ENCODE measurements at regions of chr16 and their contacts with region 1.

Region 1: DNA sequence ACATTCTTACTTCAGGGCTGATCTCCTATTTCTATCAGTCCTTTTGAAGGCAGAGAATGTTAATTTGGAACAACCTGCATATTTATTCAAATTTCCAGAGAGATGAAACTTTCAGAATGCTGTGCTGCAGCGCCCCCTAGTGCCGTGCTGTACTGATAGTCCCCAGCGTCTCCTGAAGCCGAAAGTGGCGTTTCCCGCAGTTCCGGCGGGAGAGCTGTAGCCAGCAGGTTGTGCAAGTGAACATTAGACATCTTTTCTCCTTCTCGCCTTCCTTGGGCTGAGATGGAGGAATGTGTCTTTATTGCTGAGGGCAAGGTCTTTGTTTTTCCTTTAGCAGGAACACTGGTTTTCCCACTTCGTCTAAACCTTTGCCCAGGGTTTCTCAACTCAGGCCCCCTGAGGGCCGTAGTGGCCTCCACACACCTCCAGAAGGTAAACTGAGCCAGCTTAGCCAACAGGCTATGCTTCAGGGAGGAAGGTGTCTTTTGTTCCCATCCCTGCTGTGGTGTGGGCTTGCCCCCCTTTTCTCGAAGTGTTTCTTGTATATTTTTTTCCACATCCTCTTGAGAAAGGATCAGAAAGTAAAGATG is 26.4 kb downstream of the USP10 start:
- DNase-seq: peak; percentile 62 to 85 (median 77)
- H3K4me3 ChIP-seq: peak overlapping the region; percentile 15
- H3K4me3 Mint-ChIP-seq: peak overlapping the region in 6 of 7 donors; percentile 29 to 68 (median 62)
- H3K27ac ChIP-seq: no peak overlapping the region
- H3K27ac Mint-ChIP-seq: peak overlapping the region in 4 of 8 donors; percentile 56 to 83 (median 78)
- H3K4me1 ChIP-seq: peaks cover 31% of the 10 kb centered on the region
- H3K4me1 Mint-ChIP-seq: peaks cover 47 to 71% (median 70%) of the 10 kb centered on the region in 3 donors
- H3K27me3 ChIP-seq: no peaks in the 10 kb centered on the region
- H3K27me3 Mint-ChIP-seq: no peaks in the 10 kb centered on the region

Region 2: GRCh38 chr16:84277237-84277823 is 448.8 kb before region 1 on chr16:
- CTCF ChIA-PET with region 1: interaction called, 16 read pairs
- POLR2A ChIA-PET with region 1: no interaction called
- DNase-seq: peak; percentile 29 to 80 (median 50)
- H3K4me3 ChIP-seq: no peak overlapping the region
- H3K4me3 Mint-ChIP-seq: no peak overlapping the region
- H3K27ac ChIP-seq: no peak overlapping the region
- H3K27ac Mint-ChIP-seq: no peak overlapping the region
- H3K4me1 ChIP-seq: no peaks in the 10 kb centered on the region
- H3K4me1 Mint-ChIP-seq: peaks cover 0 to 1% (median 0%) of the 10 kb centered on the region in 3 donors
- H3K27me3 ChIP-seq: no peaks in the 10 kb centered on the region
- H3K27me3 Mint-ChIP-seq: peaks cover 9 to 17% of the 10 kb centered on the region in 2 donors

Region 3: GRCh38 chr16:84511180-84511824 is 214.9 kb before region 1 on chr16:
- CTCF ChIA-PET with region 1: interaction called, 13 read pairs
- POLR2A ChIA-PET with region 1: no interaction called
- DNase-seq: peak; percentile 65 to 89 (median 81)
- H3K4me3 ChIP-seq: peak overlapping the region; percentile 4
- H3K4me3 Mint-ChIP-seq: peak overlapping the region; percentile 7 to 57 (median 16)
- H3K27ac ChIP-seq: no peak overlapping the region
- H3K27ac Mint-ChIP-seq: peak overlapping the region in 7 of 8 donors; percentile 50 to 92 (median 83)
- H3K4me1 ChIP-seq: peaks cover 85% of the 10 kb centered on the region
- H3K4me1 Mint-ChIP-seq: peaks cover 57 to 71% (median 70%) of the 10 kb centered on the region in 3 donors
- H3K27me3 ChIP-seq: no peaks in the 10 kb centered on the region
- H3K27me3 Mint-ChIP-seq: peaks cover 0 to 4% of the 10 kb centered on the region in 2 donors

Region 4: DNA sequence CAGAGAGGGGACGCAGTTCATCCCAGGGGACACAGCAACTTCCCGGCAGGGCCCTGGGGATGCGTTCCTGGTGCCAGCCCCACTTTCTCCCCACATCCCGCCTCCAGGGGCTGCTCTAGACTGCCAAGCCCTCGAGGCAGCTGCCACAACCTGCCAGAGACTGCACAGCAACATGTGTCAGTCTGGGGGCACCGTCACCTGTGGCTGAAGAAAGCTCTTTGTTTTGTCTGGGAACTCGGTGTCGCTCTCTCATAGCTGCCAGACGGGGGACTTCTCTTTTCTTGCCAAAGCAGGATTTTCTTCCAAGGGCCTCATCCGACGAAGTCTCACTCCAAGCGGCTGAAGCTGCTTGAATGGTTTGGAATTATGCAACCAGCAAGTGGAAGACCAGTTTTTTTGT is 152.0 kb before region 1 on chr16:
- CTCF ChIA-PET with region 1: no interaction called
- POLR2A ChIA-PET with region 1: no interaction called
- DNase-seq: no peak
- H3K4me3 ChIP-seq: no peak overlapping the region
- H3K4me3 Mint-ChIP-seq: peak overlapping the region in 1 of 7 donors; percentile 20
- H3K27ac ChIP-seq: no peak overlapping the region
- H3K27ac Mint-ChIP-seq: peak overlapping the region in 4 of 8 donors; percentile 17 to 57 (median 36)
- H3K4me1 ChIP-seq: no peaks in the 10 kb centered on the region
- H3K4me1 Mint-ChIP-seq: peaks cover 57 to 87% (median 81%) of the 10 kb centered on the region in 3 donors
- H3K27me3 ChIP-seq: no peaks in the 10 kb centered on the region
- H3K27me3 Mint-ChIP-seq: no peaks in the 10 kb centered on the region

Region 5: DNA sequence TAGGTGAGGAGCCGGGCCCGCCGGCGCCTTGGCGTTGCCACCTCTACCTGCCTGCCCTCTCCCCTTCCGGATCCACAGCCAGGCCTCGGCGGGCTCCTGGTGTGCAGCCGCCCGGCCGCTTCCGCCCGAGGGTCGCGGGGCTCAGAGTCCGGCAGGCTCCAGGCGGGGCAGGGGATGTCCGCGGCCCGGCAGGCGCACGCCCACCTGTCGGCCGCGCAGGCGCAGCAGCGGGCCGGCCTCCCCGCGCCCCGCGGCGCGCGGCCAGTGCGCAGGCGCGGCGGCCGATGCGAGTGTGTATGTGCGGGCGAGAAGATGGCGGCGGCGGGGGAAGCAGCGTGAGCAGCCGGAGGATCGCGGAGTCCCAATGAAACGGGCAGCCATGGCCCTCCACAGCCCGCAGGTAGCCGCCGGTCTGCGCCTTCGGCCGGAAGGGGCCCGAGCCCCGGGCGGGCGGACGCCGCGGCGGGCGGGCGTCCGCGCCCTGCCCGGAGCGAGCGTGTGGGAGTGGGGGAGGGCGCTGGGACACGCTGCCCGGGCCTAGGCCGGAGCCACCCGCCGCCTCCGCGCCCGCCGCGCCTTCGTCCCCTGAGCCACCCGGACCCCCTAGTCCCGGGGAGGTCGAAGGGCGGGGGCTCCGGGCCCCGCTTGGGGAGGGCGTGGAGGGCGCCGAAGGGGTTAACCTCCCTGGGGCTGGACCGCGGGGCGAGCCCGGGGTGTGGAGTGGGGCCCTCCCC is 26.3 kb before region 1 on chr16 and contains the start of gene USP10:
- CTCF ChIA-PET with region 1: interaction called, 10 read pairs
- POLR2A ChIA-PET with region 1: no interaction called
- DNase-seq: peak; percentile 78 to 89 (median 85)
- H3K4me3 ChIP-seq: peak within 1 kb of the TSS; percentile 74
- H3K4me3 Mint-ChIP-seq: peak within 1 kb of the TSS; percentile 96 to 99 (median 98)
- H3K27ac ChIP-seq: peak within 1 kb of the TSS; percentile 73
- H3K27ac Mint-ChIP-seq: peak within 1 kb of the TSS; percentile 91 to 98 (median 96)
- H3K4me1 ChIP-seq: peaks cover 37% of the 10 kb centered on the region
- H3K4me1 Mint-ChIP-seq: peaks cover 41 to 51% (median 48%) of the 10 kb centered on the region in 3 donors
- H3K27me3 ChIP-seq: no peaks in the 10 kb centered on the region
- H3K27me3 Mint-ChIP-seq: peaks cover 0 to 2% of the 10 kb centered on the region in 2 donors
- total RNA-seq, gene USP10: 143 to 146 TPM

Region 6: DNA sequence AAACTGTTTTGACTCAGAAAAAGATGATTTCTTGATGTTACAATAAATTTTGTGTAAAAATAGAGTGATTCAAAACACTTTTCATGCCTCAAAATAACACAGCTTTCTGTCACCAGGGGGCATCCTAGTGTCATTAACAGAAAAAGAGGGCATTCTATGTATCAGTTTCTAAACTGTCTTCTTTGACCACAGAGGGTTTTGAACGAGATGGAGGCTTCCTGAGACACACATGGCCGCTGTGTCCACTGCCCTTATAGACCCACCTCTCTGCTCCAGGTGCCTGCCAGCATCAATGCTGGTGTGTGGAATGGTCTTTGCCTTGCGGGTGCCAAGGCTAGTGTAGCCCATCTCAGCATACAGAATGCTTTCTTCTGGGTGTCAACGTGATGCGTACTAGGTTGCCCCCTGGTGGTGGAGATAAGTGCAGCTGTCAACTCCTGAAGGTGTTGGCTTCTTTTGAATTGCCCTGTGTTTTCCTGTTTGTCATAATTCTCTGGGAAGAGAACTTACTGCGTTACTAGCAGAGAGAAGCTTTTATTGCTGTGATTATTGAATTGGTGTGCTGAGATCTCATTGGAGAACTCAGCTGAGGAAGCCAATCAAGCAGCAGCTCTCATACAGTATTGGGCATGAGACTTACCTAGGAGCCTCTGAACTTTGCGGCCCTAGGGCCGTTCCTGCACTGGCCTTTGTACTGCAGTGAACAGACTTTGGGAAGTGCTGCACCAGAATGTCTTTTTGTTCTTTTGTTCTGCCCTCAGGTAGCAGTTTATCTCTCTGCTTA is 12.3 kb after region 1 on chr16:
- CTCF ChIA-PET with region 1: interaction called, 59 read pairs
- POLR2A ChIA-PET with region 1: no interaction called
- DNase-seq: peak; percentile 60 to 81 (median 67)
- H3K4me3 ChIP-seq: peak overlapping the region; percentile 44
- H3K4me3 Mint-ChIP-seq: peak overlapping the region in 6 of 7 donors; percentile 60 to 80 (median 75)
- H3K27ac ChIP-seq: no peak overlapping the region
- H3K27ac Mint-ChIP-seq: peak overlapping the region; percentile 1 to 89 (median 64)
- H3K4me1 ChIP-seq: peaks cover 26% of the 10 kb centered on the region
- H3K4me1 Mint-ChIP-seq: peaks cover 31 to 60% (median 51%) of the 10 kb centered on the region in 3 donors
- H3K27me3 ChIP-seq: no peaks in the 10 kb centered on the region
- H3K27me3 Mint-ChIP-seq: peaks cover 0 to 1% of the 10 kb centered on the region in 2 donors

Measured in CD8-positive, alpha-beta memory T cell (primary cell).